MCF 10A (cell line): ENCODE measurements at regions of chr6 and their contacts with region 1.

Region 1: GRCh38 chr6:1311400-1312202 is at the start of gene FOXQ1:
- DNase-seq: peak; percentile 45
- H3K4me3 Mint-ChIP-seq: peak within 1 kb of the TSS; percentile 77
- H3K27ac Mint-ChIP-seq: peak within 1 kb of the TSS; percentile 70
- H3K4me1 Mint-ChIP-seq: peaks cover 10% of the 10 kb centered on the region
- H3K27me3 Mint-ChIP-seq: no peaks in the 10 kb centered on the region
- CTCF ChIP-seq: no peak
- total RNA-seq, gene FOXQ1: 5.6 and 6.9 TPM in 2 replicates

Region 2: DNA sequence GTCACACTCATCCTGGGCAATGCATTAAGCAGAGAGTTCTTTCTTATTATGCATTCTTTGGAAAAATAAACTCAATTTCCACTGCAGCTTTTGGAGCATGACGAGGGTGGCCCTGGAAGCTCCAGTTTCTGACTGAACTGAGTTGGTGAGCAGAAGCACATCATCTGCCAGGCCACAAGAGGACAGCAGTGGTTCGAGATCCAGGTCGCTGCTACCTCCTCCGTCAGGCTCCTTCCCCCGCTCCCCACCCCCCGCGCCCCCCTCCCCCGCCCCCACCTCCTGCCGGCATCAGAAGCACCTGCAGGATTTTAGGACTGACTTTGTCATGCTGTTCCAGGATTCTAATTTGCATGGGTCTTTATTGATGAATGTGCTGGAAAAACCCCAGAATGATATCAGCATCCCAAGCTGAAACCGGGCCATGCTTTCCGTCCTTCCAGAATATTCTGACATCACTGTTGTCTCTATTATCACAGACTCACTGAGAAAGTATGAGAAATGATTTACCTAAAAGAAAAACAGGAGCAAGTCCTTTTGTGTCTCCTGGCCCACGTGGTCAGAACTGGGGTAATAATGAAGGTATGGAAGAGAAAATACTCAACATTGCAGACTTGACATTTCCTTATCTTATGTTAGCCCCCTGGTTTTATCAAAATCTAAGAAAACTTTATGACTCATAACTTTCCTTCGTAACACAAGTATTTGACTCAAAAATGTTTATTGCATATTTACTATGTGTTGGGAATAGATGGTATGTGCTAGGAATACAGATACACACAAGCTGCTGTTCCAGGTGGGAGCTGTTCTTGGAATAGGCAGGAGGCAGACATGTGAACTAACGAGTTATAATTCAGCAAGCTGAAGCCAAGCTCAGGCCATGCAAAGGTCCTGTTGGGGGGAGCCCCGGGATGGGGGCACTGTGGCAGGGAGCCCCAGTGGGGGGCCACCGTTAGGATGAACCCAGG is 398.4 kb before region 1 on chr6:
- CTCF ChIA-PET with region 1: interaction called, 4 read pairs
- POLR2A ChIA-PET with region 1: interaction called, 23 read pairs
- intact Hi-C with region 1: loop called (anchors 1 kb)
- DNase-seq: peak; percentile 48
- H3K4me3 Mint-ChIP-seq: no peak overlapping the region
- H3K27ac Mint-ChIP-seq: no peak overlapping the region
- H3K4me1 Mint-ChIP-seq: no peaks in the 10 kb centered on the region
- H3K27me3 Mint-ChIP-seq: peaks cover 12% of the 10 kb centered on the region
- CTCF ChIP-seq: peak; percentile 77

Region 3: GRCh38 chr6:1082285-1082935 is 229.2 kb before region 1 on chr6:
- CTCF ChIA-PET with region 1: interaction called, 3 read pairs
- POLR2A ChIA-PET with region 1: interaction called, 11 read pairs
- intact Hi-C with region 1: loop called (anchors 10 kb)
- DNase-seq: peak; percentile 73
- H3K4me3 Mint-ChIP-seq: peak overlapping the region; percentile 44
- H3K27ac Mint-ChIP-seq: peak overlapping the region; percentile 73
- H3K4me1 Mint-ChIP-seq: peaks cover 16% of the 10 kb centered on the region
- H3K27me3 Mint-ChIP-seq: no peaks in the 10 kb centered on the region
- CTCF ChIP-seq: no peak

Region 4: DNA sequence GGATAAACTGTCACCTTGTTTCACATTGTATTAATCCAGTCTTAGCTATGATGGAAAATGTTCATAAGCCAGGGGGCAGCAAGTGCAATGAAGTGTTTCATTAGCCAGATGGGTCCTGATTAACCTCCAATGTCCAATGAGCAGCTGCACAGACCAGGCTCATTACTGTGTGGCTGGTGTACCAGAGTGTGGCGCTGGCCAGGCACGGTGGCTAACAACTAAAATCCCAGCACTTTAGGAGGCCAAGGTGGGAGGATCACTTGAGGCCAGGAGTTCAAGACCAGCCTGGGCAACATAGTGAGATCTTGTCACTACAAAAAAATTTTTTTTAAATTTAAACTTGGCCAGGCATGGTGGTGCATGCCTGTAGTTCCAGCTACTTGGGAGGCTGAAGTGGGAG is 201.4 kb before region 1 on chr6:
- CTCF ChIA-PET with region 1: no interaction called
- POLR2A ChIA-PET with region 1: interaction called, 35 read pairs
- intact Hi-C with region 1: loop called (anchors 1 kb)
- DNase-seq: no peak
- H3K4me3 Mint-ChIP-seq: no peak overlapping the region
- H3K27ac Mint-ChIP-seq: peak overlapping the region; percentile 99
- H3K4me1 Mint-ChIP-seq: peaks cover 29% of the 10 kb centered on the region
- H3K27me3 Mint-ChIP-seq: no peaks in the 10 kb centered on the region
- CTCF ChIP-seq: no peak

Region 5: DNA sequence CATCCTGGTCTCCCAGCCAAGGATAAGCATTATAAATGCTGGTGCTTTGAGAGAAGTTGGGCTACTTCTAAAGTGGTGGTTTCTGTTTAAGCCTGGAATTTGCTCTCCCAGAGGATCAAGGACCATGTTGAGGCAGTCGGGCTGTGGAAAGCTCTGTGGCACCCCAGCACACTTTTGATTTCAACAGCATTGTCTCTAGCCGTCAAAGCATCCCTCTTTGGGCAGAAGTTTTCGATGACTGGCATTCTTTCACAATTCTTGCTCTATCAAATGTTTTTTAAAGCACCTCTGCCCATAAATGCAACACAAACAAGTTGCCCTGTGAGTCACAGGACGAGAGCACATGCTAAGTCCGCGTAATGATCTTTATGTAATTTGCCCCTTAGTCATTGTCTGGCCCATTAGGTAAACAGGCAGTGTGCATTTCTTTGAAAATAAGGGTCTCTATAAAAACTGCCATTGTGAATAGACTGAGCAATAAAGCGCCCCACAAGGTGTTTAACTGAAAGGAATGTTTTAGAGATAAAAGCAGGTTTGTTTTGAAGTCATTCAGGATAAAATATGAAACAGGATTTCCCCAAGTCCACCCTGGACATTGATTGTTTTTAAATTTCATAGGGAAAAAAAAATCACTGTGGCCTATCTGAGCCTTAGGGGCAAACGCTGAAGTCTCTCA is 44.4 kb before region 1 on chr6:
- CTCF ChIA-PET with region 1: no interaction called
- POLR2A ChIA-PET with region 1: interaction called, 18 read pairs
- intact Hi-C with region 1: loop called (anchors 2 kb)
- DNase-seq: peak; percentile 94
- H3K4me3 Mint-ChIP-seq: peak overlapping the region; percentile 40
- H3K27ac Mint-ChIP-seq: peak overlapping the region; percentile 71
- H3K4me1 Mint-ChIP-seq: peaks cover 15% of the 10 kb centered on the region
- H3K27me3 Mint-ChIP-seq: no peaks in the 10 kb centered on the region
- CTCF ChIP-seq: no peak

Region 6: GRCh38 chr6:1325461-1326309 is 14.1 kb after region 1 on chr6:
- CTCF ChIA-PET with region 1: interaction called, 9 read pairs
- POLR2A ChIA-PET with region 1: interaction called, 78 read pairs
- intact Hi-C with region 1: no loop called
- DNase-seq: peak; percentile 94
- H3K4me3 Mint-ChIP-seq: no peak overlapping the region
- H3K27ac Mint-ChIP-seq: peak overlapping the region; percentile 21
- H3K4me1 Mint-ChIP-seq: peaks cover 42% of the 10 kb centered on the region
- H3K27me3 Mint-ChIP-seq: no peaks in the 10 kb centered on the region
- CTCF ChIP-seq: no peak